Common myeloid progenitor, CD34-positive (primary cell): ENCODE measurements at regions of chr14 and their contacts with region 1.

Region 1: GRCh38 chr14:106277503-106277902 is 751.1 kb downstream of the TMEM121 start:
- DNase-seq: peak in 1 of 3 donors; percentile 24
- H3K4me3 ChIP-seq: no peak overlapping the region
- H3K27ac ChIP-seq: no peak overlapping the region
- H3K4me1 ChIP-seq: peaks cover 0 to 41% (median 12%) of the 10 kb centered on the region in 4 experiments
- H3K27me3 ChIP-seq: peaks cover 0 to 1% (median 0%) of the 10 kb centered on the region in 5 experiments

Region 2: GRCh38 chr14:106163306-106163705 is 114.2 kb before region 1 on chr14:
- CTCF ChIA-PET with region 1: no interaction called
- POLR2A ChIA-PET with region 1: no interaction called
- DNase-seq: no peak
- H3K4me3 ChIP-seq: no peak overlapping the region
- H3K27ac ChIP-seq: no peak overlapping the region
- H3K4me1 ChIP-seq: no peaks in the 10 kb centered on the region
- H3K27me3 ChIP-seq: peaks cover 0 to 21% (median 3%) of the 10 kb centered on the region in 5 experiments

Region 3: DNA sequence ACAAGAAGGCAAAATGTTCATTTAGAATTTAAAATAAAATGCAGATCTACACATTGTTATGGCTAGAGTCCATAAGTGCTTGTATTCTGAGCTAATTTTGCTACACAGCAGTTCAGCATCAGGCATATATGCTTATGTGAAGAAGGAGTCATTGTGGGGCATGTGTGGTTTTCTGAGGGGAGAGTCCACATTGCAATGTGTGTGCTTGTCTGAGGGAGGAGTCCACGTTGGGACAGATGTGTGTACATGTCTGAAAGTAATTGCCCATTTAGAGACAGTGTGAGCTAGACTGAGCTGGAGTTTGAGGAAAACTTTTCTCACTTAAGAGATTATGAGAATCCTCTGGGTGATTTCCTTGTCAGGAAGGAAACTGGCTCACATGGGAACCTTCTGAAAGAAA is 16.8 kb after region 1 on chr14:
- CTCF ChIA-PET with region 1: interaction called, 30 read pairs
- POLR2A ChIA-PET with region 1: no interaction called
- DNase-seq: peak in 2 of 3 donors; percentile 46 to 68
- H3K4me3 ChIP-seq: no peak overlapping the region
- H3K27ac ChIP-seq: no peak overlapping the region
- H3K4me1 ChIP-seq: peaks cover 0 to 2% (median 0%) of the 10 kb centered on the region in 4 experiments
- H3K27me3 ChIP-seq: peaks cover 0 to 5% (median 2%) of the 10 kb centered on the region in 5 experiments

Region 4: GRCh38 chr14:106302661-106303060 is 25.2 kb after region 1 on chr14:
- CTCF ChIA-PET with region 1: interaction called, 18 read pairs
- POLR2A ChIA-PET with region 1: interaction called, 3 read pairs
- DNase-seq: peak; percentile 12 to 81 (median 72)
- H3K4me3 ChIP-seq: no peak overlapping the region
- H3K27ac ChIP-seq: no peak overlapping the region
- H3K4me1 ChIP-seq: peaks cover 0 to 54% (median 21%) of the 10 kb centered on the region in 4 experiments
- H3K27me3 ChIP-seq: no peaks in the 10 kb centered on the region

Region 5: DNA sequence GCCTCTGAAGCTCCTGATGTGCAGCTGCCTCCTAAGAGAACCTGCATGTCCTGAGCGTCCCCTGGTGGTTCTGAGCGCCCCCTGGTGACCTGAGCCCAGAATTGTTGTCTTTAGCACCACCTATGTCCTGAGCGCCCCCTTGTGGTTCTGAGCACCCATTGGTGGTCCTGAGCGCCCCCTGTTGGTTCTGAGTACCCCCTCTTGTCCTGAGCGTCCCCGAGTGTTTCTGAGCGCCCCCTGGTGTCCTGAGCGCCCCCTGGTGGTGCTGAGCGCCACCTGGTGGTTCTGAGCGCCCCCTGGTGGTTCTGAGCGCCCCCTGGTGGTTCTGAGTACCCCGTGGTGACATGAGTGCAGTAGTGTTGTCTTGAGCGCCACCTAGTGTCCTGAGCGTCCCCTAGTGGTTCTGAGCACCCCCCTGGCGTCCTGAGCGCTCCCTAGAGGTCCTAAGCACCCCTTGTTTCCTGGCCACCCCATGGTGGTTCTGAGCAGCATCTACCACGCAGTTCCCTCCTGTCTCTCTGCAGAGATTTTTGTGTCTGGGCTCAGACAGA is 31.4 kb after region 1 on chr14:
- CTCF ChIA-PET with region 1: interaction called, 11 read pairs
- POLR2A ChIA-PET with region 1: interaction called, 3 read pairs
- DNase-seq: peak; percentile 80 to 92 (median 91)
- H3K4me3 ChIP-seq: no peak overlapping the region
- H3K27ac ChIP-seq: no peak overlapping the region
- H3K4me1 ChIP-seq: peaks cover 0 to 10% (median 5%) of the 10 kb centered on the region in 4 experiments
- H3K27me3 ChIP-seq: peaks cover 0 to under 1% (median 0%) of the 10 kb centered on the region in 5 experiments